Dorsolateral prefrontal cortex (tissue), 120 donors: ENCODE measurements at regions of chr15 and their contacts with region 1.

Region 1: GRCh38 chr15:88258093-88258641 is 1.6 kb upstream of the NTRK3 start:
- DNase-seq: peak in 8 of 10 donors; percentile 39 to 79 (median 68)
- H3K4me3 ChIP-seq: peak overlapping the region; percentile 52 to 88 (median 74)
- H3K27ac ChIP-seq: peak overlapping the region in 58 of 59 donors; percentile 17 to 97 (median 90)
- H3K27me3 ChIP-seq: peaks cover 0 to 8% (median 0%) of the 10 kb centered on the region in 45 donors
- CTCF ChIP-seq: peak in 42 of 56 donors; percentile 10 to 55 (median 37)

Region 2: DNA sequence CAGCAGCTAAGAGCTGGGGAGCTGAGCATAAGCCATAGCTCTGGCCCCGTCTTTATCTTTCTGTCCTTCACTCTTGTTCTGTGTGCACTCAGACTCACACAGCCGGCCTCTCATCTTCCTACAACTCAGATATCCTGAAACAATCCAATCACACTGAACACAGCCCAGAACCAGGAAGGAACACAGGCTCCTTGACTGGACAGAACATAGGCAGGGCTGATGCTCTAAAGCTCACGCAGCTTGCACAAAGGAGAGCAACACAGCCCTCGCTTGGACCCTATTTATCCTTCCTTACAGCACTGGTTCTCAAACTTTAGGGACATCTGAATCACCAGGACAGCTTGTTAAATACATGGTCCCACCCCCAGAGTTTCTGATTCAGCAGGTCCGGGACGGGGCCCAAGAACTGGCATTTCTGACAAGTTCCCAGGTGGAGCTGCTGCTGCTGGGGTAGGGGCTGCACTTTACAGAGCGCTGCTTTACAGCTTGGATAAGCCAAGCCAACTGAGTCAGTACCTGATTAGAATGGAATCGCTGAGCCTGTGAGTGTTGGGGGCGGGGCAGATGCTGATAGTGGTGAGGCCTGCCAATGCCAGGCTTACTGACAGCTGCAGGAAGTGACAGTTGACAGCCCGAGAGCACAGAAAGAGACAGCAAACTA is 144.0 kb after region 1 on chr15:
- intact Hi-C with region 1: loop called in 1 of 2 experiments (anchors 5 kb)
- DNase-seq: peak in 9 of 10 donors; percentile 22 to 75 (median 59)
- H3K4me3 ChIP-seq: peak overlapping the region in 1 of 59 donors; percentile 26
- H3K27ac ChIP-seq: peak overlapping the region in 51 of 59 donors; percentile 2 to 92 (median 72)
- H3K27me3 ChIP-seq: peaks cover 0 to 8% (median 0%) of the 10 kb centered on the region in 45 donors
- CTCF ChIP-seq: no peak

Region 3: DNA sequence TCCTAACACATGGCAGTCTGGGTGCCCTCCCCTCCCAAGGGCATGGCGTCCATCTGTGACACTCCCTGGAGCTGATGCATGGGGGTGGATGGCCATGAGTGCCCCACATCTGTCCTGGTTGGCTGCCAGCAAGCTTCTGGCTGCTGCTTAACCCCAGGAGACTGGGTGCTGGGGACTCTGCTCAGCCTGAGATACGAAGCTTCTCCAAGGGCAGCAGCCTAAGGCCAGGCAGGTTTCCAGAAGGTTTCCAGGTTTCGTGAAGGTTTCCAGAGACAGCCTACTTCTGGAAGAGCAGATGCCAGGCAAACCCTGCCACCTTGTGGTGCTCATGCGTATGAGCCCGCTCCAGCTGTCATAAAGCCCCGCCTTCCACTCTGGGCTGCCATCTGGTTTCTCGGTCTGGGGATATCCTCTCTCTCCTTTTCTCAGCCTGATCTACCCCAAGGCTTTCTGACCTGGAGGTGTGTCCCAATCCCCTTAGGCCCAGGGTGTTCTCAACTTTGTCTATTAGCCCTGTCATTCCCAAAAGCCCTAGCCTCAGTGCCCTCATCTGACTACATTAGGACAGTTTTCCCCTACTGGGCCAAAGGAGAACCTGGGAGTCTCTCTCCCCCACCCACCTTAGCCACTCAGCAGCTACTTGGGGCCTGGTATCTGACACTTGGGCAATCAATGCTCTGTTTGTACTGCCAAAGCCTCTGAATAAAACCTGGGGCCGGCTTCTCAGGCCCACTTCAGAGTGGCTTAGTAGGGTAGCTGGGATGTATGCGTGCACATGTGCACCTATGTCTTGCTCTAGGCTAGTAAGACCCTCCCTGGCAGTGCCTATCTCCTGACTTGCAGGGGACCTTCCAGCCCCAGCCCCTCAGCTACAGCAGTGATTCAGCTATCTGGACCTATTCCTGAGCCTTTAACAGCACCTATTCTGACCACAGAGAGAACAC is 197.0 kb after region 1 on chr15:
- intact Hi-C with region 1: loop called in 1 of 2 experiments (anchors 5 kb)
- DNase-seq: peak; percentile 35 to 78 (median 65)
- H3K4me3 ChIP-seq: peak overlapping the region in 3 of 59 donors; percentile 3 to 24 (median 13)
- H3K27ac ChIP-seq: peak overlapping the region in 9 of 59 donors; percentile 6 to 65 (median 28)
- H3K27me3 ChIP-seq: no peaks in the 10 kb centered on the region
- CTCF ChIP-seq: peak; percentile 31 to 83 (median 72)